Heart left ventricle (tissue), 16 donors: ENCODE measurements at regions of chr17 and their contacts with region 1.

Region 1: DNA sequence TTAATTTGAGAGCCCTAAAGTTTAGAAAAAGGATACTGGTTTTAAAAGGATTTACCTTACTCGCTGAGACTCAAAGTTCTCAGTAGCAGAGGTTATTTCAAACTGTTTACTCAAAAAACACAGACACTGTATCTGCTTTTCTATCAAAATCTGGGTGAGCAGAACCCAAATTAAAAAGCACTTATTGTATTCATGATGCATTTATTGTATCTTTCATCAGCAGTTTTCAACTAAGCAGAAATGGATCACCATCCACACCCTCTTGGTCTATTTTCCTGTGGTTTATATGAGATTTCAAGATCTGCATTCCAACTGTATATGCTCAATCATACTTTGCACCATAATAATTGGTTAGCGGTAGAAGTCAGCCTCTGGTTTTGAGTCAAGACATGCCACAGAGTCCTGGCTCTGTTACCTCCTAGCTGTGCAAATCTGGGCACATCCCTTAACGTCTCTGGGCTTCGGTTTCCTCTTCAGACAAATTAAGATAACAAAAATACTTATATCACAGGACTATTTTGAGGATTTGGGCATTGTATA is 109.5 kb downstream of the ASIC2 start:
- DNase-seq: no peak
- ATAC-seq: no peak
- H3K4me3 ChIP-seq: no peak overlapping the region
- H3K27ac ChIP-seq: no peak overlapping the region
- H3K4me1 ChIP-seq: no peaks in the 10 kb centered on the region
- H3K27me3 ChIP-seq: peaks cover 0 to 56% (median 6%) of the 10 kb centered on the region in 9 donors
- CTCF ChIP-seq: no peak
- POLR2A ChIP-seq: no peak

Region 2: DNA sequence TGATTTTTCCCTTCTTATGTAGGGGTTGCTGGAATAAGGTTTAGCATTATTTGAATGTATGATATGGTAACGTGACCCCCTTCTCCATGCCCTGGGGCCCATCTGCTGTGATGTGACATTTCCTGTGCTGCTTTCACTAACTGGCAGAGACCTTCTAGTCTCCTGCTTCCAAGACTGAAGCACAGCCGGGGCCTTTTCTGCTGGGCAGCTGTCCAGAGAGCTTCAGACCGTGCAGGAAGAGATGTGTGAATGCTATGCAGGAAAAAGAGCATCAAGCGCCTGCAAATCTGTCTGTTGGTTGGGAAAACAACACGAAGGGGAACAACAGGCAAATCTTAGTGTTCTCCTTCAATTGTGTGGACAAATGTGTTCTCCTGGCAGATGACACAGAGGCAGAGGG is 63.5 kb before region 1 on chr17:
- intact Hi-C with region 1: loop called in 1 of 10 experiments (anchors 10 kb)
- DNase-seq: no peak
- ATAC-seq: no peak
- H3K4me3 ChIP-seq: no peak overlapping the region
- H3K27ac ChIP-seq: no peak overlapping the region
- H3K4me1 ChIP-seq: no peaks in the 10 kb centered on the region
- H3K27me3 ChIP-seq: peaks cover 0 to 32% (median 6%) of the 10 kb centered on the region in 9 donors
- CTCF ChIP-seq: no peak
- POLR2A ChIP-seq: no peak

Region 3: DNA sequence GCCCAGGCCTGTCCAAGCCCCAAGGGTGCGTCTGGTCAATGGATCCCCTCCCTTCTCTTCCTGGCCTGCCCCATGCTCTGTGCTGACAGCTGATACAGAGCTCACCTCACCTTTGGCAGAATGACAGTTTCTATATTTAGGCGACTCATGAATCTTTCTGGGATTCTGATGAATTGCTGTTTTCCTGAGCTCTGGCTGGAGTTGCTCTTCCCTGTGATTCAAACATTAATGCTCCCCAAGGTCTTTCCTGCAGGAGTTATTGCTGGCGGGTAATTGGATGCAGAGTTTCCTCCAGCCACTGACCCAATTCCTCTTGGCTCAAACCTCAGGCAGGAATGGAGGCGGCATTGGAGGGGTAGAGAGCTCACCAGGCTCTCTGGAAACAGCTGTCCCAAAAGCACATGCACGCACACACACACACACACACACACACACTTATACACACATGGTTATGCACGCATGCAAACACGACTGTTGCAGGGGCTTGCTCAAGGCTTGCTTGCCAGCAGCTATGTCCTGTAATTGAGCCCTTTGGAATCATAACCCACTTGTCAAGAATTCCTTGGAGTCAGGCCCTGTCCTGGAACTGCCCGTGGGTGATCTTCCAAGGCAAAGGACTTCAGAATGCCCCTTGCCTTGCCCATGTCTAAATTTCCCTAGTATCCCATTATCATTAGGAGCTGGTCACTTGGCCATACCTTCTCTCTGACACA is 19.2 kb before region 1 on chr17:
- intact Hi-C with region 1: no loop called
- DNase-seq: peak in 3 of 5 donors; percentile 24 to 35 (median 32)
- ATAC-seq: peak; percentile 78 to 89 (median 84)
- H3K4me3 ChIP-seq: no peak overlapping the region
- H3K27ac ChIP-seq: no peak overlapping the region
- H3K4me1 ChIP-seq: peaks cover 0 to 17% (median 2%) of the 10 kb centered on the region in 12 donors
- H3K27me3 ChIP-seq: peaks cover 0 to 6% (median 0%) of the 10 kb centered on the region in 9 donors
- CTCF ChIP-seq: no peak
- POLR2A ChIP-seq: no peak